OCI-LY7 (cell line): ENCODE measurements at regions of chr6 and their contacts with region 1.

Region 1: GRCh38 chr6:136792410-136793262 is at the start of gene MAP3K5:
- DNase-seq: peak; percentile 94
- H3K4me3 ChIP-seq: peak within 1 kb of the TSS; percentile 94
- H3K27ac ChIP-seq: peak within 1 kb of the TSS; percentile 86
- H3K4me1 ChIP-seq: peaks cover 34% of the 10 kb centered on the region
- CTCF ChIP-seq: peak; percentile 83
- total RNA-seq, gene MAP3K5: 12.0 and 13.8 TPM in 2 replicates

Region 2: GRCh38 chr6:136582711-136583471 is 209.7 kb before region 1 on chr6:
- CTCF ChIA-PET with region 1: interaction called, 3 read pairs
- POLR2A ChIA-PET with region 1: no interaction called
- intact Hi-C with region 1: loop called (anchors 1 kb)
- DNase-seq: peak; percentile 52
- H3K4me3 ChIP-seq: no peak overlapping the region
- H3K27ac ChIP-seq: no peak overlapping the region
- H3K4me1 ChIP-seq: no peaks in the 10 kb centered on the region
- CTCF ChIP-seq: peak; percentile 90

Region 3: DNA sequence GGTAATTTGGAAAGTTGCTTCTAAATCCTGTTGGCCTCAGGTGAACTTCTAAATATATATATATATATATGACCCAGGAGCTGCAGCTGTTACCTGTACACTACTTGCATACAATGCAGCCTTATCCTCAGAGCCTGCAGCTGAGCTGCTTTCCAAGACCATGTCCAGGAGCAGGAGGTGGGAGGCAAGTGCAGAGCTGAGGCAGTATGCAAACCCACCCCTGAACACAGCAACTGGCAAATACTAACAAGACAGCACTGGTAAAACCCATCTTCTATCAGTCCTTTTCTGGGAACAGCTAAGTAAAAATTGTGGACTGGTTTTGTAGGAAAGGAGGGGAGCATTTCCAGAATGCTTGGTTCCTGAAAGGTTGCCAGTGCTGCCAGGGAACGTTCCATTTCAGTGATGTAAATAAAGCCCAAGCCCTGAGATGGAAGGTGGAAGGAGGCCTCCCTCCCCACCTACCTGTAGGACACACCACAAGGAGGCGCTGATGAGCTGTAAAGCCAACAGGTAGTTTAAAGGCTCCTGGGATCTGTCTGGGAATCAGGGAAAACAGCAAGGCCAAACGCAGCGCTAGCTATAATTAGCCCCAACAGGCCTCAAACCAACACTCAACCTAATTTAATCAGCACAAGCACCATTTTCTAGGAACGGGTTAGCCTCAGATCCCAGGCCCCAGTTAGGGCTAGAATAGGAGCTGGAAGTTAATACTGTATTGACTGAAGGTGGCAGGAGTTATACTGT is 148.6 kb before region 1 on chr6:
- CTCF ChIA-PET with region 1: interaction called, 68 read pairs
- POLR2A ChIA-PET with region 1: interaction called, 70 read pairs
- intact Hi-C with region 1: loop called (anchors 1 kb)
- DNase-seq: peak; percentile 81
- H3K4me3 ChIP-seq: no peak overlapping the region
- H3K27ac ChIP-seq: no peak overlapping the region
- H3K4me1 ChIP-seq: peaks cover 17% of the 10 kb centered on the region
- CTCF ChIP-seq: peak; percentile 99

Region 4: DNA sequence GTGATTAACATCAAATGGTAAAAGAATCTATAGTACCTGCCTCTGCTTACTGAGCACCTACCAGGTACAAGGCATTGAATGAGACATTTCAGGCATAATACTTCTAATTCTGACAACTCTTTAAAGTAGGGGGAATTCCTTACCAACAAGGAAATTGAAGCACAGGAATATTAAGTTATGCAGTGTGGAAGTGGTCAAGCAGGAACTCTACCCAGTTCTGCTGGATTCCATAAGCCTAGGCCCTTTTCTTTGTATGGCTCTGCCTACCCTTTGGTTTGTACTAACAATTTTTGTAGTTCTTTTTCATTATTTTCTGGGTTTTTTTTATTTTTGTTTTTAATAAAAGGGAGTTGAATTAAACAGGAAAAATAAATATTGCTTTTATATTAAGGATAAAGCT is 114.8 kb before region 1 on chr6:
- CTCF ChIA-PET with region 1: no interaction called
- POLR2A ChIA-PET with region 1: no interaction called
- intact Hi-C with region 1: no loop called
- DNase-seq: no peak
- H3K4me3 ChIP-seq: no peak overlapping the region
- H3K27ac ChIP-seq: no peak overlapping the region
- H3K4me1 ChIP-seq: no peaks in the 10 kb centered on the region
- CTCF ChIP-seq: no peak

Region 5: DNA sequence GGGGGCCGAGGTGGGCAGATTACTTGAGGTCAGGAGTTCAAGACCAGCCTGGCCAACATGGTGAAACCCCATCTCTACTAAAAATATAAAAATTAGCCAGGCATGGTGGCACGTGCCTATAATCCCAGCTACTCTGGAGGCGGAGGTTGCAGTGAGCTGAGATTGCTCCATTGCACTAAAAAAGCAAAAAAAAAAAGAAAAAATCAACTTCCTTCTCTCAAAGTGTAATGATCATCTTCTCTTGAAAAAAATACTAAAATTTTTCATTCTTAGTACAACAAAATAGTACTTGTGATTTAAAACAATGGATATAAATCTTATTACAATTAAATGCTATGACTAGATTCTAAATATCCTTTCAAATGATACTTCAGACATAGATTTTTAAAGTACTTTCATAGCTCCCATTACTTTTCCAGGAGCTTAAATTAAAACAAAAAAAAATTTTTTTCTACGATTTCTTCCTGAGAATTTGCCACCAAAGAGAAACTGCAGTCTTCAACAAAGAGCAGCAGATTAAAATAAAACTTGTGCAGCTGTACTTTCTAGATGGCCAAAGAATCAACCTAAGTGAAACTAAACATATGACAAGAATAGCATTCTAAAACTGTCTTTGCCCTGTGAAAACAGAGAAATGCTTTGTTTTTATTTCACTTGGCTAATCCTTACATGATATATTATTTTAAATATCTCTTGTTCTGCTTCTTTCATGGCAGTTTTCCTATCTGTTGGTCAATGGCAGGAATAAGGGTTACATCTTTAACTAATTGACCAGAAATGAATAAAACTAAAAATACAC is 75.5 kb before region 1 on chr6:
- CTCF ChIA-PET with region 1: interaction called, 43 read pairs
- POLR2A ChIA-PET with region 1: interaction called, 156 read pairs
- intact Hi-C with region 1: loop called (anchors 1 kb)
- DNase-seq: peak; percentile 72
- H3K4me3 ChIP-seq: peak overlapping the region; percentile 59
- H3K27ac ChIP-seq: peak overlapping the region; percentile 93
- H3K4me1 ChIP-seq: peaks cover 54% of the 10 kb centered on the region
- CTCF ChIP-seq: no peak

Region 6: DNA sequence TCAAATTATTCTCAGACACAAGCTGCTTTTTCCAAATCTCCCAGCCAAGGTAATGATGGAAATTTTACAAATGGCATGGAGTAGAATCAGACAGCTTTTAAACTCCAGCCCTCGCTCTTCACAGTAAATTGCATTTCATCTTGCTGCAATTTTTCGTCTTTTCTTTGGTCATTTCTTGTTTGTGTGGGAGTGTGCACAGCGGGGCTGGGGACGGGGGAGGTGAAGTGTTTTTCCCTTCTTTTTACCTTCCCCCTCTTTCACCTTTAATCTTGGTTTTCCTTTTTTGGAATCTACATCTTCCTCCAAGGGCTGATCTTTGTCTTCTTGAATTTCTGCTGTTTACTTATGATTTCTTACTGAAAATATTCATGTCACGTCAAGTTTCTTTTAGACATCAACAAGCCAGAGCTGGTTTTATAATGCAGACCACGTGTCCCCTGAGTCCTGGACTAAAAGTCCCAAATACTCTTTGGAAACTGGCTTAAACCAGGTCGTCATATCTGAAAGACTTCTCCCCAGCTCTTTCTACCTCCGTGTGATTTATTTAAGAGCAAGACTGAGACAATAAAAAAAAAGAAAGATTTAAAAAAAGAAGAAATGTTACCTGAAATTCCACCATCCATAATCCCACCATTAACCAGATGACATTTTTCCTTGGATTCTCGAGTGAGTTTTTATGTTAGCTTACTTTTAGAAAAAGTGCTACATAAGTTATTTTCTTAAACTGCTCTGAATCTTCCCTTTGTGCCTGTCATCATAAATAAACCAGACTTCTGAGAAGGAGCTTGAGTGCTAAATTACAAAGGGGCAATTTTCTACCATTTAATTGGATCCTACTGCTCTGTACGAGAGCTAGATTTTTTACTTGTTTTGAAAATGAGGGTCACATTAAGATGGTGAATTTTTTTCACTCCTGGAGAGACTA is 52.3 kb before region 1 on chr6:
- CTCF ChIA-PET with region 1: interaction called, 4 read pairs
- POLR2A ChIA-PET with region 1: interaction called, 11 read pairs
- intact Hi-C with region 1: no loop called
- DNase-seq: no peak
- H3K4me3 ChIP-seq: no peak overlapping the region
- H3K27ac ChIP-seq: no peak overlapping the region
- H3K4me1 ChIP-seq: peaks cover 26% of the 10 kb centered on the region
- CTCF ChIP-seq: no peak

Region 7: GRCh38 chr6:136761227-136761922 is 31.3 kb before region 1 on chr6:
- CTCF ChIA-PET with region 1: interaction called, 19 read pairs
- POLR2A ChIA-PET with region 1: interaction called, 142 read pairs
- intact Hi-C with region 1: loop called (anchors 1 kb)
- DNase-seq: peak; percentile 67
- H3K4me3 ChIP-seq: peak overlapping the region; percentile 48
- H3K27ac ChIP-seq: peak overlapping the region; percentile 95
- H3K4me1 ChIP-seq: peaks cover 60% of the 10 kb centered on the region
- CTCF ChIP-seq: no peak